CD4-positive, alpha-beta T cell (primary cell): ENCODE measurements at regions of chr16 and their contacts with region 1.

Region 1: DNA sequence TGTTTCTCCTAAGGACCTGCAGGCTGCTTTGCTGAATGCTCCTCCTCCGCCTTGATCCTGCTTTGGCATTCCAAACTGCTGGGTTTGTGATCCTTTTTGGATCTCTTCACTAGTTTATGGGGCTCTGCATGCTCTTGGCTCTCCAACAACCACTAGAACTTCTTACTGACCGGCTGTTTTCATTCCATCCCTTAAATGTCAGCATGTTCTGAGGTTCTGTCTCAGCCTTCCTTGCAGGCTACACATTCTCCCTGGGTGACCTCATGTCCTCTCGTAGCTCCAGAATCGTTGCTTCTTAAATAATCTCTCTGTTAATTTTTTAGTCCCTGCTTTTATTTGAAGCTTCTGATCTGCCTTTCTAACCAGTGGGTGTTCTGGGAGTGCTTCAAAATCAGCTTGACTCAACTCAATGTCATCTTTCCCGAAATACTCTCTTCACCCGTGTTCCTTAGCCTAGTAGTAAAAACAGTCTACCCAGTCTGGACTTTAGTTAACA is 119.0 kb upstream of the HS3ST2 start:
- DNase-seq: no peak
- ATAC-seq: no peak
- H3K4me3 ChIP-seq: no peak overlapping the region
- H3K4me3 Mint-ChIP-seq: no peak overlapping the region
- H3K27ac ChIP-seq: no peak overlapping the region
- H3K27ac Mint-ChIP-seq: no peak overlapping the region
- H3K4me1 ChIP-seq: no peaks in the 10 kb centered on the region
- H3K4me1 Mint-ChIP-seq: no peaks in the 10 kb centered on the region
- H3K27me3 ChIP-seq: peaks cover 14 to 20% of the 10 kb centered on the region in 2 experiments
- H3K27me3 Mint-ChIP-seq: peaks cover 15% of the 10 kb centered on the region
- CTCF ChIP-seq: no peak

Region 2: DNA sequence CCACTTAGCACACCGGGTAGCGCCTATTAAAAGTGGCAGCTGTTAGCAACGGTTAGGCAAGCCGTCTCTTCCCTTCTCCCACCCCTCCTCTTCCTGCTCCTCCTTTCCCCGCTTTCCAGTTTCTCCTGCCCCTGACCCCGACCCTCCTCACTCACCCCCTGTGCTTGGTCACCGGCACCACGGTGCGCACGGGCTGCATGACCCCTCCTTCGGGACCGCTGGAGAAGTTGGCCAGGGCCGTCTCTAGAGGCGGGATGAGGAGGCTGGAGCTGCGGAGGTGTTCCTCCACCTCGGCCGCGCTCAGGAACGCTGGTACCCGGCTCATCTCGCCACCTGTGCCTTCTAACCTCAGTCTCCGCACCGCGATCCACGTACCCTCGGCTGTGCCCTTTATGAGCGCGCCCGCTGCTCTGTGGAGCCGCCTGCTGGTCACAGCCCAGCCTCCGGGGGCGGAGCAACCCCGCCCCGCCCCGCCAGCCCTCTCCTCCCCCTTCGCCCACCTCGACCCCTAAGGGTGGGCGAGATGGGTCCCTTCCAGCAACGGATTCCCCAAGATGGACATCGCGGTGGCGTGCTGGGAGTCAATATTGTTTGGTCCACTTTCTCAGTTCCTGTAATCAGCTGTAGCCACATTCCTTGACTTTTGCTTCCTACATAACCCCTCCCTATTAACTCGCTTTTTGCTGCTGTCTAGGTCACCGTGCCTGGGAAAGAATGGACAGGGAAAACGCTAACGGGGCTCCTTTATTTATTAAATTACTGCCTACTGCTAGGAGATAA is 1416.8 kb before region 1 on chr16 and contains the start of gene CRYM:
- CTCF ChIA-PET with region 1: no interaction called
- POLR2A ChIA-PET with region 1: no interaction called
- intact Hi-C with region 1: loop called in 1 of 2 experiments (anchors 10 kb)
- DNase-seq: peak in 12 of 14 experiments; percentile 5 to 50 (median 20)
- ATAC-seq: peak; percentile 77
- H3K4me3 ChIP-seq: no peak within 1 kb of the TSS
- H3K4me3 Mint-ChIP-seq: no peak within 1 kb of the TSS
- H3K27ac ChIP-seq: no peak within 1 kb of the TSS
- H3K27ac Mint-ChIP-seq: no peak within 1 kb of the TSS
- H3K4me1 ChIP-seq: peaks cover 7% of the 10 kb centered on the region
- H3K4me1 Mint-ChIP-seq: no peaks in the 10 kb centered on the region
- H3K27me3 ChIP-seq: peaks cover 21 to 71% of the 10 kb centered on the region in 2 experiments
- H3K27me3 Mint-ChIP-seq: peaks cover 85% of the 10 kb centered on the region
- CTCF ChIP-seq: peak; percentile 28
- total RNA-seq, gene CRYM: not detected